GM10248 (cell line): ENCODE measurements at regions of chr5 and their contacts with region 1.

Region 1: GRCh38 chr5:14700478-14701436 is 36.2 kb downstream of the OTULIN start:
- DNase-seq: no peak
- CTCF ChIP-seq: no peak

Region 2: DNA sequence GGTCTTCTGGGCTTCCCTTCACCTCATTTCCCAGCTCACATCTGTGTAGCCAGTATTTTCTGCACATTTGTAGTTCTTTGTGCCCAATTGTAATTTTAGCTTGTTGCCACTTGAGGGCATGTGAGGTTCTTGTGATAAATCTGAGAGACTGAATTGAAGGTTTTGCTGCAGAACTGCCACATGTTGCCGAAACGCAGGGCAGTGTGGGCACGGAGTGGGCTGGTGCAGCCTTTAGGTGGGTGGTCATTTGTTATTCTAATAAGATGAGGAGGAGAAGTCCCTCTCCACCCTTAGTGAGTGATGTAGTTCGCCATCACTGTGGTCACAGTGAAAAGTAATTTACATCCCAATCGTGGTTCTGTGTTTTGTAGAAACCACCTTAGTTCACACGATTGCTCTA is 15.0 kb before region 1 on chr5:
- CTCF ChIA-PET with region 1: interaction called, 28 read pairs
- POLR2A ChIA-PET with region 1: no interaction called
- DNase-seq: peak; percentile 67
- CTCF ChIP-seq: peak; percentile 56